ENCODE measurements at regions of chr4 and their contacts with region 1.

Region 1: GRCh38 chr4:55948726-55949474 is at the start of gene CEP135:
- DNase-seq: peak; percentile 96
- ATAC-seq: peak; percentile 81
- H3K4me3 Mint-ChIP-seq: peak within 1 kb of the TSS; percentile 79
- H3K27ac Mint-ChIP-seq: peak within 1 kb of the TSS; percentile 94
- H3K4me1 Mint-ChIP-seq: peaks cover 37% of the 10 kb centered on the region
- H3K27me3 Mint-ChIP-seq: no peaks in the 10 kb centered on the region
- total RNA-seq, gene CEP135: 17.0 to 17.5 TPM

Region 2: DNA sequence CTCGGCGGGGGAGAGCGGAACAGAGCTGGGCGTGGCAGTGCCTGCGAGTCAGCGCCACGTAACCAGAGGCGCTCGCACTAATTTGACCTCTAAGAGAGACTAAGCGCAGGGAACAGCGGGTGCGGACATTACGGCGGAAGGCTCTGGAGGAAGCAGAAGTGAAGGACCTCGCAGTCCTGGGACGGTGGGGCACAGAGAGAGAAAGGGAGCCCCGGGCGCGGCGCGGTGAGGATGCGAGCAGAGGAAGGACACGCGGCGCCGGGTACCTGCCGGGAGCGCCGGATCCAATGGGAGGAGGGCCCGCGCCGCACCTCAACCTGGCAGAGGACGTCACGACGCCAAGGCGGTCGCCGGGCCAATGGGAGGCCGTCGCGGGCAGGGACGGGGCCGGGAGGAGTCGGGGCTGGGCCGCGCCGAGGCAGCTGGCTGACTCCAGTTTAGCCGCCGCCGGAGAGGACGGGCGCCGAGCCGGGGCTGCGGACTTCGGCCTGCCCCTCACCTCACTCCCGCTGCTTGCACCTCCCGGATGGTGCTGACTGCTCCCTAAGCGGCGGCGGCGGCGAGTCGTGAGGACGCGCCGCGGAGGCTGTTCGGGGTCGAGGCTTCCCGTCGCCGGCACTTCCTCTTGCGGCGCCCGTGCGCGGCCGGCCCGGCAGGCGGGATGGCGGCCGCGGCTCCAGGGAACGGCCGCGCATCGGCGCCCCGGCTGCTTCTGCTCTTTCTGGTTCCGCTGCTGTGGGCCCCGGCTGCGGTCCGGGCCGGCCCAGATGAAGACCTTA is 553.2 kb before region 1 on chr4 and contains the start of gene TMEM165:
- CTCF ChIA-PET with region 1: interaction called, 6 read pairs
- POLR2A ChIA-PET with region 1: no interaction called
- intact Hi-C with region 1: loop called in 1 of 2 experiments (anchors 2 kb)
- DNase-seq: peak; percentile 96
- ATAC-seq: peak; percentile 97
- H3K4me3 Mint-ChIP-seq: peak within 1 kb of the TSS; percentile 89
- H3K27ac Mint-ChIP-seq: peak within 1 kb of the TSS; percentile 89
- H3K4me1 Mint-ChIP-seq: peaks cover 30% of the 10 kb centered on the region
- H3K27me3 Mint-ChIP-seq: no peaks in the 10 kb centered on the region
- total RNA-seq, gene TMEM165: 43.4 to 49.5 TPM

Region 3: GRCh38 chr4:55876387-55876786 is 72.5 kb before region 1 on chr4:
- CTCF ChIA-PET with region 1: interaction called, 13 read pairs
- POLR2A ChIA-PET with region 1: no interaction called
- intact Hi-C with region 1: no loop called
- DNase-seq: no peak
- ATAC-seq: no peak
- H3K4me3 Mint-ChIP-seq: no peak overlapping the region
- H3K27ac Mint-ChIP-seq: no peak overlapping the region
- H3K4me1 Mint-ChIP-seq: no peaks in the 10 kb centered on the region
- H3K27me3 Mint-ChIP-seq: no peaks in the 10 kb centered on the region

Region 4: GRCh38 chr4:55993994-55994663 is 45.2 kb after region 1 on chr4:
- CTCF ChIA-PET with region 1: interaction called, 3 read pairs
- POLR2A ChIA-PET with region 1: interaction called, 4 read pairs
- intact Hi-C with region 1: loop called in 1 of 2 experiments (anchors 2 kb)
- DNase-seq: peak; percentile 22
- ATAC-seq: peak; percentile 88
- H3K4me3 Mint-ChIP-seq: no peak overlapping the region
- H3K27ac Mint-ChIP-seq: peak overlapping the region; percentile 67
- H3K4me1 Mint-ChIP-seq: peaks cover 32% of the 10 kb centered on the region
- H3K27me3 Mint-ChIP-seq: no peaks in the 10 kb centered on the region

Region 5: GRCh38 chr4:56435306-56435926 is 486.5 kb after region 1 on chr4 and contains the start of gene PPAT:
- CTCF ChIA-PET with region 1: interaction called, 7 read pairs
- POLR2A ChIA-PET with region 1: interaction called, 7 read pairs
- intact Hi-C with region 1: loop called (anchors 1 kb)
- DNase-seq: peak; percentile 99
- ATAC-seq: peak; percentile 78
- H3K4me3 Mint-ChIP-seq: peak within 1 kb of the TSS; percentile 88
- H3K27ac Mint-ChIP-seq: peak within 1 kb of the TSS; percentile 97
- H3K4me1 Mint-ChIP-seq: peaks cover 50% of the 10 kb centered on the region
- H3K27me3 Mint-ChIP-seq: no peaks in the 10 kb centered on the region
- total RNA-seq, gene PPAT: 36.8 to 48.2 TPM

Region 6: DNA sequence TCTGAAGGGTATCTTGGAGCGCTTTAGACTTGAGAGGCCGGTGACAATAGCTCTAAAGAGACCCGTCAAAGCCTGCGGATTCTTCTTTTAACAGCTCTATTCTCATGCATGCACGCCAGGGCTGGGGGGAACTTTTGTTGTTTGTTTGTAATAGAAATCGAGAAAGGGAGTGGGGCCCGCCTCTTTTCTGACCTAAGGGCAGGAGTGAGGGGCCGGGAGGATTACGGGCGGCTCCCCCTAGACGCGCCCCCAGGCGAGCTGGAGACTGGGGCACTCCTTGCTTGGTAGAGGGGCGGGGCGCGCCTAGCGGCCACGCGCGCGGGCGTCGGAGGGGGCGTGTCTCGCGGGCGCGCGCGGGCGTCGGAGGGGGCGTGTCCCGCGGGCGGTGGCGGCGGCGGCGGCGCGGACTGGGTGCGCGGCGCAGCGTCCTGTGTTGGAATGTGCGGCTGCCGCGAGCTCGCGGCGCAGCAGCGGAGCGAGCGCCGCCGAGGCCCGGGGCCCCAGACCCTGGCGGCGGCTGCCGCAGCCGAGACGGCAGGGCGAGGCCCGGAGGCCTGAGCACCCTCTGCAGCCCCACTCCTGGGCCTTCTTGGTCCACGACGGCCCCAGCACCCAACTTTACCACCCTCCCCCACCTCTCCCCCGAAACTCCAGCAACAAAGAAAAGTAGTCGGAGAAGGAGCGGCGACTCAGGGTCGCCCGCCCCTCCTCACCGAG is 958.7 kb after region 1 on chr4 and contains the start of gene REST:
- CTCF ChIA-PET with region 1: no interaction called
- POLR2A ChIA-PET with region 1: no interaction called
- intact Hi-C with region 1: loop called (anchors 2 kb)
- DNase-seq: peak; percentile 88
- ATAC-seq: peak; percentile 64
- H3K4me3 Mint-ChIP-seq: peak within 1 kb of the TSS; percentile 73
- H3K27ac Mint-ChIP-seq: peak within 1 kb of the TSS; percentile 72
- H3K4me1 Mint-ChIP-seq: peaks cover 38% of the 10 kb centered on the region
- H3K27me3 Mint-ChIP-seq: no peaks in the 10 kb centered on the region
- total RNA-seq, gene REST: 44.0 to 44.9 TPM